Mammary epithelial cell (primary cell): ENCODE measurements at regions of chr1 and their contacts with region 1.

Region 1: GRCh38 chr1:94335950-94336349 is 82.2 kb upstream of the ABCD3 start:
- DNase-seq: peak; percentile 80
- H3K4me3 ChIP-seq: no peak overlapping the region
- H3K27ac ChIP-seq: no peak overlapping the region
- H3K4me1 ChIP-seq: peaks cover 20% of the 10 kb centered on the region
- H3K27me3 ChIP-seq: no peaks in the 10 kb centered on the region
- CTCF ChIP-seq: peak; percentile 86 to 91

Region 2: DNA sequence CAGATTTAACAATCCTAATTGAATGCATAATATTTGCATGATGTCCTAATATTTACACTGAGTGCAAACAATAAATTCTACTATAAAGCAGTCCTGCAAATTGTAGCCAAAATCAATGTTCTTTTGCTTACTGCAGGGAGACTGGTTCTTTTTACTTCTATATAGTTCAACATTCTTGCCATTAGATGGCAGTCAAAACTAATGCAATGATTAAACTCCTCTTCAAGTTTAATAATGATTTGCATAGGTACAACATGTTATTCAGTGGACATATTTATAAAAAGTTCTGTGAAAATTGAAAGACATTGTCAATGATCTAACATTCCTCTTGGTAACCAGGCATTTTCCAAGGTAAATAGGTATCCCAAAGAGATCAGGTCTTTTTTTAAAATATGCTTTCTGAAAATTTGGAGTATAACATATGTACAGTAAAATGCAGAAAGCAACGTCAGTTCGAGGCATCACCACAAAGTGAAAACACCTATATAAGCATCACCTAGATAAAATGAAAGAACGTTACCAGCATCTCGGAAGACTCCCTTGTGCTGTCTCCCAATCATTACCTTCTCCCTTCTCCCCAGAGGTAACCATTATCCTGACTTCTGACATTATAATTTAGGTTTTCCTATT is 897.9 kb before region 1 on chr1:
- CTCF ChIA-PET with region 1: no interaction called
- dilution Hi-C with region 1: no loop called
- in situ Hi-C with region 1: no loop called
- intact Hi-C with region 1: loop called (anchors 5 kb)
- DNase-seq: peak; percentile 39
- H3K4me3 ChIP-seq: no peak overlapping the region
- H3K27ac ChIP-seq: no peak overlapping the region
- H3K4me1 ChIP-seq: peaks cover 5% of the 10 kb centered on the region
- H3K27me3 ChIP-seq: no peaks in the 10 kb centered on the region
- CTCF ChIP-seq: peak; percentile 52 to 63

Region 3: DNA sequence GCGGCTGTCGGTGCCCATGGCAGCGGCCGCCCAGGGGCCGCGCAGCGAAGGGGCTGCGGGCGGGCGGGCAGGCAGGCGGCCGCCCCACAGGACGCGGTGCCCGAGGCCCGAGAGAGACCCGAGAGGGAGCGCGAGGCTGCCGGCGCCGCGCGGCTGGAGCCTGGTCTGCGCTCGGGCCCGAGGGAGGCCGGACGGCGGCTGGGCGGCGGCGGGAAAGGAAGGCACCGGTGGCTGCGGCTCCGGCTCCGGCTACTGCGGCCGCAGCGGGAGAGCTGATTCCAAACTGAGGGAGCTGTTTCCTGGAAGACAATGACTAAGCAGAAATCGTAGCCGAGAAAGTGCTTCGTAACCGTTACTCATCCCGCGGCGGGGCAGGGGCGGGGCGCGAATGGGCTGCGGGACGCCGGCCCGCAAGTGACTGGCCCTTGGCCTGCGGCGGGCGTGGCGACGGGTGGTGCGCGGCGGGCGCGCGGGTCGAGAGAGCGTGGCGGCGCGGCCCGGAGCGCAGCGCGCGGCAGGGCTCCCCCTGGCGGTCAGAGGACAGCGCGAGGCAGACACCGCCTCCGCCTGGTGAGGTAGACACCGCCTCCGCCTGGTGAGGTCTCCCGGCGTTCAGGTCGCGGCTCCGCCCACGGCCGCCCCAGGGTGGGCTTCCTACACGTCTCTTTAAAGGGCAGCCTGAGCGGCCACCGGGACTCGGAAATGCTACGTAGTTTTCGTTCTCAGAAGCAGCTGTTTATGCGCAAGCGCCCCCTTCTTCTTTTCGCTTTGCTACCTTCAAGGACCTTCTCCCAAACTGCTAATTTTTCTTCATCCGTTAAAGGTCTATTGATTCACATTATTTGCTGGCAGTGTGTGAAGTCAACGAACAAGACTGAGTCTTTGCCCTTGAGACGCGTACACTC is 426.6 kb before region 1 on chr1 and contains the start of gene GCLM:
- CTCF ChIA-PET with region 1: no interaction called
- dilution Hi-C with region 1: no loop called
- in situ Hi-C with region 1: no loop called
- intact Hi-C with region 1: loop called (anchors 1 kb)
- DNase-seq: peak; percentile 94
- H3K4me3 ChIP-seq: peak within 1 kb of the TSS; percentile 50 to 90 (median 78)
- H3K27ac ChIP-seq: peak within 1 kb of the TSS; percentile 88
- H3K4me1 ChIP-seq: peaks cover 16% of the 10 kb centered on the region
- H3K27me3 ChIP-seq: no peaks in the 10 kb centered on the region
- CTCF ChIP-seq: peak; percentile 68 to 70
- total RNA-seq, gene GCLM: 96.5 to 129 TPM

Region 4: DNA sequence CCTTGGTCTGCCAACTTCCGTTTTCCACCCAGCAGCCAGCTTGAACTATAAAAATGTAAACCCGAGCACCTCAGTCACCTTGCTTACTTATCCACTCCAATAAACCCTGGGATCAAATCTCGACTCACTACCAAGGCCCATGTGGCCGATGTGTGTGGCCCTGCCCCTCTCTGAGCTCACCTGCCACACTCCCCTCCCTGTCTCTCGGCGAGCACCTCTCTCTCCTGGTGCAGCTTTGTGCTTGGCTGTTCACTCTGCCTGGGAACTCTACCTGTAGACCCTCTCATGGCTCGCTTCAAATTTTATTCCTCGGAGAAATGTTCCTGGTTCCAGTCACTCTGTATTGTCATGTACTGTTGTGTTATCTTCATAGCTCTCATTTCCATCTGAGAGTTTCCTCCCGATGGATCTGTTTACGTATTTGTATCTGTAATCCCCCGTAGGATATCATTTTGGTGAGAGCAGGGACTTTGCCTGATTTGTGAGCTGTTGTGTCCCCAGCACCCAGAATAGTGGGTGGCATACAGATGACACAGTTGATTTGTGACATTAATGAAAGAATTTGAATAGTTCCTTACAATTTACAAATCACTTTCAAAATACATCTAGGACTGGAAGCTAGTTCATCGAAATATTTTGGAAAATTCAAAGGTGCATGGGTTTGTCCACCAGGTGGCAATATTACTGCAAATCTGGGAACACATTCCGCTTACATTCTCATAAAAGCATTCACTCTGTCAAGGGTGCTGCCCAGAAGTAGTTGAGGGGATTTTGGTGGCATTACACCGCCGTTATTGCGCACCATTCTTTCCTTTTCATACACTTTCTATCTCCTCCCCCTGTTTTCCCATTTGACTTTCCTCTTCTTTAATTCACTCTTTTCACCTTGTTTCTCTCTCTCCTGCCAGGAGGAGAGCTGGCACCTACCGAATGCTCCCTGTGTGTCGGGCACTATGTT is 310.3 kb before region 1 on chr1:
- CTCF ChIA-PET with region 1: interaction called, 4 read pairs
- dilution Hi-C with region 1: no loop called
- in situ Hi-C with region 1: no loop called
- intact Hi-C with region 1: loop called (anchors 1 kb)
- DNase-seq: peak; percentile 63
- H3K4me3 ChIP-seq: no peak overlapping the region
- H3K27ac ChIP-seq: no peak overlapping the region
- H3K4me1 ChIP-seq: peaks cover 60% of the 10 kb centered on the region
- H3K27me3 ChIP-seq: no peaks in the 10 kb centered on the region
- CTCF ChIP-seq: peak; percentile 68 to 74

Region 5: GRCh38 chr1:94061513-94062443 is 274.2 kb before region 1 on chr1:
- CTCF ChIA-PET with region 1: interaction called, 35 read pairs
- dilution Hi-C with region 1: no loop called
- in situ Hi-C with region 1: loop called in 1 of 2 experiments (anchors 5 kb)
- intact Hi-C with region 1: loop called (anchors 1 kb)
- DNase-seq: peak; percentile 47
- H3K4me3 ChIP-seq: no peak overlapping the region
- H3K27ac ChIP-seq: no peak overlapping the region
- H3K4me1 ChIP-seq: peaks cover 7% of the 10 kb centered on the region
- H3K27me3 ChIP-seq: no peaks in the 10 kb centered on the region
- CTCF ChIP-seq: peak; percentile 92 to 96

Region 6: DNA sequence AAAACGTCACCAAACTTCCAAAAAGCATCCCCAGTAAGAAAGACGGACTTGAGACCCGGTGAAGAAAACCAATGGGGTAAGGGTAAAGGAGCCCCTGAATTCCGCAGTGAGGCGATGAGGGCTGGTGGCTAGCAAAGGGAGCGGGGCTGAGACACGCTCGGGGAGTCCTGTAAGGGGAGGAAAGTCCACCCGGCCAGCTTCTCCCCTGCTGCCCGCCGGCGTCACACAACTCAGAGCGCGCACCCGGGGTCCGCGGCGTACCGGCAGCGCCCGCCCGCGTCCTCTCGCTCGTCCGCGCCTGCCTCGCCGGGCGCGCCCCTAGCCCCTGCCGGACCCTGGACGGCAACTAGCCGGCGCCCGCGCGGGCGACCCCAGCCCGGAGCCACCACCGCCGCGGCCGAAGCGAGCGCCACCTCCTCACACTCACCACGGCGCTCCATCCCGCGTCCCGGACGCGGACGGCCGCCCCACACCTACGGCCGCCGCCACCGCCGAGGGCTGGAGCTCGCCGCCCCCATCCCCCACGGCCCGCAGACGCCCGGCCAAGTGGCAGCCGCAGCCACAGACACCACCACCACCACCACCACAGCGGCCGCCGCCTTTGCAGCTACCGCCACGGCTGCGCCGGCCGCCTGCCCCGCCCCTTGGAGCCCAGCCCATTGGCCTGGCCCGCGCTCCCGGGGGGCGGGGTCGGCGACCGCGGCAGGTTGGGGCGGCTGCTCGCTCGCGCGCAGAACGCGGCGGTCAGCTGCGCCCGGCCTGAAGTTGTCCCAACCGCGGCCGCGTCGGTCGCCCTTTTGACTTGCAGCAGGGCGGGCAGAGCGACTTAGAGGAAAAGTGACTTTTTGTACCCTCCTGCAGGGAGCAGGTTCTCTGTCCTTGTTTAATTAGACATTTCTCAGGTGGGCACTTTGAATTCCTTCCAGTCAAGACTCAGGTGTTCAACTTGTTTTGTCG is 88.5 kb before region 1 on chr1:
- CTCF ChIA-PET with region 1: no interaction called
- dilution Hi-C with region 1: no loop called
- in situ Hi-C with region 1: no loop called
- intact Hi-C with region 1: loop called (anchors 2 kb)
- DNase-seq: peak; percentile 76
- H3K4me3 ChIP-seq: peak overlapping the region; percentile 61 to 82 (median 78)
- H3K27ac ChIP-seq: peak overlapping the region; percentile 86
- H3K4me1 ChIP-seq: peaks cover 26% of the 10 kb centered on the region
- H3K27me3 ChIP-seq: no peaks in the 10 kb centered on the region
- CTCF ChIP-seq: no peak

Region 7: GRCh38 chr1:94258873-94259331 is 77.0 kb before region 1 on chr1:
- CTCF ChIA-PET with region 1: no interaction called
- dilution Hi-C with region 1: no loop called
- in situ Hi-C with region 1: no loop called
- intact Hi-C with region 1: no loop called
- DNase-seq: peak; percentile 94
- H3K4me3 ChIP-seq: no peak overlapping the region
- H3K27ac ChIP-seq: peak overlapping the region; percentile 82
- H3K4me1 ChIP-seq: peaks cover 48% of the 10 kb centered on the region
- H3K27me3 ChIP-seq: no peaks in the 10 kb centered on the region
- CTCF ChIP-seq: no peak

Region 8: GRCh38 chr1:94316836-94317789 is 18.8 kb before region 1 on chr1:
- CTCF ChIA-PET with region 1: no interaction called
- dilution Hi-C with region 1: no loop called
- in situ Hi-C with region 1: no loop called
- intact Hi-C with region 1: no loop called
- DNase-seq: peak; percentile 52
- H3K4me3 ChIP-seq: no peak overlapping the region
- H3K27ac ChIP-seq: no peak overlapping the region
- H3K4me1 ChIP-seq: peaks cover 13% of the 10 kb centered on the region
- H3K27me3 ChIP-seq: no peaks in the 10 kb centered on the region
- CTCF ChIP-seq: no peak

Region 9: GRCh38 chr1:94396356-94397010 is 60.5 kb after region 1 on chr1:
- CTCF ChIA-PET with region 1: no interaction called
- dilution Hi-C with region 1: no loop called
- in situ Hi-C with region 1: no loop called
- intact Hi-C with region 1: no loop called
- DNase-seq: no peak
- H3K4me3 ChIP-seq: no peak overlapping the region
- H3K27ac ChIP-seq: no peak overlapping the region
- H3K4me1 ChIP-seq: peaks cover 11% of the 10 kb centered on the region
- H3K27me3 ChIP-seq: no peaks in the 10 kb centered on the region
- CTCF ChIP-seq: no peak